ENCODE measurements at regions of chr20 and their contacts with region 1.

Region 1: GRCh38 chr20:3820048-3820900 is at the start of gene AP5S1:
- DNase-seq: peak; percentile 90 to 97 (median 91)
- H3K4me3 ChIP-seq: peak within 1 kb of the TSS; percentile 78 to 88
- H3K4me3 Mint-ChIP-seq: peak within 1 kb of the TSS; percentile 83 to 94 (median 91)
- H3K27ac ChIP-seq: peak within 1 kb of the TSS; percentile 99
- H3K27ac Mint-ChIP-seq: peak within 1 kb of the TSS; percentile 96 to 99 (median 99)
- H3K4me1 ChIP-seq: peaks cover 53% of the 10 kb centered on the region
- H3K4me1 Mint-ChIP-seq: peaks cover 30 to 66% (median 50%) of the 10 kb centered on the region in 4 donors
- H3K27me3 ChIP-seq: no peaks in the 10 kb centered on the region
- H3K27me3 Mint-ChIP-seq: no peaks in the 10 kb centered on the region
- total RNA-seq, gene AP5S1: 10.4 to 11.1 TPM

Region 2: DNA sequence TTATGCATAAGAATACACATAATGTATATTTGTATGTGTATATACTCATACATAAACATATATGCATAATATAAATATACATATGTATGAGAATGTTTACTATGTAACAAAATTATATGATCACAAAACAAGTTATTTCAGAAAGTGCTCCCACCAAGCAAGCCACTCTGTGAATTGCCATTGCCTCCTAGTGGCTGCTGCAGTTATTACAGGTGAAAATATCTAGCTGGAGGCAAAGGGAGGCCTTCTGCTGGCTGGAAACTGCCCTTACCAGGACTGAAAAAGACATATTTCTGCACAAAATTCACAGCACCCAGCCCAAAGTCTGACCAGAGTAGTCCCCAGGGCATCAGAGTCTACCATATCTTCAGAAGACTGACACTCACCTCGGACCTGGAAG is 124.1 kb before region 1 on chr20:
- CTCF ChIA-PET with region 1: no interaction called
- POLR2A ChIA-PET with region 1: no interaction called
- intact Hi-C with region 1: no loop called
- DNase-seq: no peak
- H3K4me3 ChIP-seq: no peak overlapping the region
- H3K4me3 Mint-ChIP-seq: no peak overlapping the region
- H3K27ac ChIP-seq: no peak overlapping the region
- H3K27ac Mint-ChIP-seq: no peak overlapping the region
- H3K4me1 ChIP-seq: no peaks in the 10 kb centered on the region
- H3K4me1 Mint-ChIP-seq: no peaks in the 10 kb centered on the region
- H3K27me3 ChIP-seq: no peaks in the 10 kb centered on the region
- H3K27me3 Mint-ChIP-seq: peaks cover 2% of the 10 kb centered on the region in 2 donors

Region 3: DNA sequence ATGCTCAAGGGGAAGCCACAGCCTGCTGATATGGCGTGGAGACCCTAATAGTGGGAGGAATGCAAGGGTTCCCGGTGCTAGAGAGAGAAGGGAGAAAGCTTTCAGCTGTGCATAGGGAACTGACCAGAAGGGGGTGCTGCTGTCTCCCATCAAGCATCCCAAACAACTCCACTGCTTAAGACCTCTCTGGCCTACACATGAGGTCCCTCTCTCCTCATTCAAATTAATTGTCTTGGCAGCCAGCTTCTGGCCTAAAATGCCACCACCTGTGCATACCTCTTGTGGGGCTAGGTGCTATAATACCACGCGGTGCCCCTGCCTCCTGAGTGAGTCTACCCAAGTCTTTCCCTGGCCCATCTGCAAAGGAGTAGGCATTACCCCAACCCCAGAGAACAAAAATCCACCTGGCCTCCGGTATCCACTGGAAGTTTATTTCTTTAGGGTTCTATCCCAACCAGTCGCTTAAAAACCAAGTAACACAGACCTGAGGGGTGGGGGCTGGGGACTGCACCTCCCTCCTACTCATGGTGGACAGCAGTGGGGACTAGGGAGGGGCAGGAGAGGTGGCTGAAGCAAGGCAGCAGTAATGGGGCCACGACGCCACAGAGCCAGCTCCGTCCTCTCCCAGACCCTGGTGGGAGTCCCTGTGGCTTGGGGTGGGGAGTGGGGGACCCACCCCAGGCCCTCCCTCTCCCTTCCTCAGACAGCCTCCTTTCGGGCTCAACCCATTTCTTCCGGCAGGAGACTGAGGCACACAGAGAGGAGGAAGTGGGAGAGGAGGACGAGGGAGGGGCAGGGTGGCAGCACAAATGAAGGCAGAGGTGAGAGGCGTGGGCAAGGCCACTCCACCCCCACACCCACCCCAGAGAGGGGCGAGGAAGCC is 66.9 kb before region 1 on chr20:
- CTCF ChIA-PET with region 1: interaction called, 8 read pairs
- POLR2A ChIA-PET with region 1: interaction called, 5 read pairs
- intact Hi-C with region 1: loop called (anchors 1 kb)
- DNase-seq: peak; percentile 51 to 61 (median 57)
- H3K4me3 ChIP-seq: no peak overlapping the region
- H3K4me3 Mint-ChIP-seq: peak overlapping the region in 1 of 8 donors; percentile 17
- H3K27ac ChIP-seq: no peak overlapping the region
- H3K27ac Mint-ChIP-seq: peak overlapping the region in 4 of 7 donors; percentile 53 to 84 (median 66)
- H3K4me1 ChIP-seq: no peaks in the 10 kb centered on the region
- H3K4me1 Mint-ChIP-seq: peaks cover 2 to 14% (median 12%) of the 10 kb centered on the region in 4 donors
- H3K27me3 ChIP-seq: no peaks in the 10 kb centered on the region
- H3K27me3 Mint-ChIP-seq: peaks cover 0 to 2% of the 10 kb centered on the region in 2 donors

Region 4: DNA sequence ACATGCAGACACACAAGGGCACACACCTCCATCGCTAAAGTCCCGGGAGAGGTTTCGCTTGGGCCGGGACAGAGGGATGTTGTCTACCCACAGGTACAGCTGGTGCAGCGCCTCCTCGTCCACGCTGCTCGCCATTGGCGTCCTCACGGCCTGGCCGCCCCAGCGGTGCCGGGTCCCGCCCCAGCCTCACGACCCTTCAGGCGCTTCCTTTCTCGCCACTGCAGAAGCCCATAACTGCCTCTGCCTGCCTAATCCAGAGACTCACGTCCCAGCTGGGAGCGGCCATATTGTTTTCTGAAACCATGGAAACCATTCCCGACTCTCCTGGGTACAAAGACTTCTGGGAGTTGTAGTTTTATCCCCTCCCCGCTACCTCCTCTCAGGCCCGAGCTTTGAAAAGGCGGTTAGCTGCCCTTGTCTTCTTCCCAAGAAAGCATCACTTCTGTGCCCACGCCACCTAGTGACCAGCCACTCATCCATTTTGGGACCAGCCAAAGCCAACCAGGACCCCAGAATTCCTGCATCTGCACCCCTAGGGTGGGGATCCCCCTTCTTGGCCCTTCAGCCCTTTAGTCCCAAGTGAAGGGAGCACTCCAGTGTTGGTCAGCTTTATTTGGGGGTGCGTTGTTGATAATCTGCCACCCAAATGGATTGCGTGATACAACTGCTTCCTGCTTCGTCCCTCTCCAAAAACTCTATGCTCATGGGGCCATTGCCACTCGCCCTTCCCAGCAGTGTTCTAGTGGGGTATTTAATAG is 38.9 kb before region 1 on chr20 and contains the start of gene SPEF1:
- CTCF ChIA-PET with region 1: interaction called, 12 read pairs
- POLR2A ChIA-PET with region 1: interaction called, 180 read pairs
- intact Hi-C with region 1: loop called (anchors 1 kb)
- DNase-seq: peak; percentile 57 to 67 (median 64)
- H3K4me3 ChIP-seq: peak within 1 kb of the TSS in 1 of 2 donors; percentile 18
- H3K4me3 Mint-ChIP-seq: peak within 1 kb of the TSS; percentile 35 to 82 (median 78)
- H3K27ac ChIP-seq: peak within 1 kb of the TSS; percentile 31
- H3K27ac Mint-ChIP-seq: peak within 1 kb of the TSS; percentile 5 to 91 (median 78)
- H3K4me1 ChIP-seq: peaks cover 52% of the 10 kb centered on the region
- H3K4me1 Mint-ChIP-seq: peaks cover 26 to 61% (median 43%) of the 10 kb centered on the region in 4 donors
- H3K27me3 ChIP-seq: no peaks in the 10 kb centered on the region
- H3K27me3 Mint-ChIP-seq: peaks cover 1% of the 10 kb centered on the region in 2 donors
- total RNA-seq, gene SPEF1: not detected

Region 5: GRCh38 chr20:3786665-3787323 is 33.5 kb before region 1 on chr20 and contains the start of gene CENPB:
- CTCF ChIA-PET with region 1: no interaction called
- POLR2A ChIA-PET with region 1: interaction called, 180 read pairs
- intact Hi-C with region 1: loop called (anchors 1 kb)
- DNase-seq: peak; percentile 82 to 94 (median 88)
- H3K4me3 ChIP-seq: peak within 1 kb of the TSS; percentile 29 to 38
- H3K4me3 Mint-ChIP-seq: peak within 1 kb of the TSS; percentile 74 to 87 (median 84)
- H3K27ac ChIP-seq: peak within 1 kb of the TSS; percentile 12
- H3K27ac Mint-ChIP-seq: peak within 1 kb of the TSS; percentile 79 to 93 (median 88)
- H3K4me1 ChIP-seq: peaks cover 37% of the 10 kb centered on the region
- H3K4me1 Mint-ChIP-seq: peaks cover 23 to 41% (median 33%) of the 10 kb centered on the region in 4 donors
- H3K27me3 ChIP-seq: no peaks in the 10 kb centered on the region
- H3K27me3 Mint-ChIP-seq: no peaks in the 10 kb centered on the region
- total RNA-seq, gene CENPB: 52.2 to 56.7 TPM

Region 6: DNA sequence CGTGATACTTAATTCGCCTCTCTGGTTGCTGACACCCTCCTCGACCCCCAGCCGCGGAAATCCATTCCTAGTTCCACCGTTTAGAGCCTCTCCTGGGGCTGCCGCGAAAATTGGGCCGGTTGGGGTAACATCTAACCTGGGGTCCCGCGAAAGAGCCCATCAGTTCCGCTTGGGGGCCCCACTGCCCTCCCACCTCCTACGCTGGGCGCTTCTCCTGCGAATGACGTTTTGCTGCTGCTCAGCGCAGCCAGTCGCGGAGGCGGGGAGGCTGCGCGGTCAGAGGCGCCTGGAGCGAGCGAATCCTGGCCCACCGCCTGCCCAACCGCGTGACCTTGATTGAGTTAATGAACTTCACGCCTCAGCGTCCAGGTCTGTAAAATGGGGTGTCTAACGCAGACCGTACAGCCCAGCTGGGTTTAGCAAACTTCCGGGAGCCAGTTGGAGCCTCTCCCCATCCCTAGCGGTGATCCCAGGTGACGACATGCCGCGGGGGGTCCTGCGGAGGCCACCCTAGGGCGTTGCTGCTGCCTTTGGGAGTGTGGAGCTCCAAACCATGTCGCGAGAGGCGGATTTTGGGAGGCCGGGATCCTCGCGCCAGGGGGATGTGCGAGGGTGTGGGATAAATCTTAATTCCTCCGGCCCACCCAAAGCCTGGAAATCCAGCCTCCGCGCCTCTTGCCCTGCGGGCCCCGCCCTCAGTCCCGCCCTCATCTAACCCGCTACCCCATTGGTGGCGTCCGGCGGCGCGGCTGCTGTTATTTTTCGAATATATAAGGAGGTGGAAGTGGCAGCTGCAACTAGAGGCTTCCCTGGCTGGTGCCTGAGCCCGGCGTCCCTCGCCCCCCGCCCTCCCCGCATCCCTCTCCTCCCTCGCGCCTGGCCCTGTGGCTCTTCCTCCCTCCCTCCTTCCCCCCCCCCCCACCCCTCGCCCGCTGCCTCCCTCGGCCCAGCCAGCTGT is 24.5 kb before region 1 on chr20 and contains the start of gene CDC25B:
- CTCF ChIA-PET with region 1: interaction called, 25 read pairs
- POLR2A ChIA-PET with region 1: interaction called, 180 read pairs
- intact Hi-C with region 1: loop called (anchors 1 kb)
- DNase-seq: peak; percentile 83 to 94 (median 85)
- H3K4me3 ChIP-seq: peak within 1 kb of the TSS; percentile 94 to 97
- H3K4me3 Mint-ChIP-seq: peak within 1 kb of the TSS; percentile 98 to 100 (median 100)
- H3K27ac ChIP-seq: peak within 1 kb of the TSS; percentile 86
- H3K27ac Mint-ChIP-seq: peak within 1 kb of the TSS; percentile 95 to 99 (median 97)
- H3K4me1 ChIP-seq: peaks cover 38% of the 10 kb centered on the region
- H3K4me1 Mint-ChIP-seq: peaks cover 21 to 54% (median 35%) of the 10 kb centered on the region in 4 donors
- H3K27me3 ChIP-seq: no peaks in the 10 kb centered on the region
- H3K27me3 Mint-ChIP-seq: no peaks in the 10 kb centered on the region
- total RNA-seq, gene CDC25B: 410 to 420 TPM

Region 7: GRCh38 chr20:3846740-3847428 is 26.6 kb after region 1 on chr20 and contains the start of gene MAVS:
- CTCF ChIA-PET with region 1: interaction called, 8 read pairs
- POLR2A ChIA-PET with region 1: interaction called, 7 read pairs
- intact Hi-C with region 1: loop called (anchors 1 kb)
- DNase-seq: peak; percentile 81 to 84 (median 81)
- H3K4me3 ChIP-seq: peak within 1 kb of the TSS; percentile 45 to 92
- H3K4me3 Mint-ChIP-seq: peak within 1 kb of the TSS; percentile 79 to 93 (median 92)
- H3K27ac ChIP-seq: peak within 1 kb of the TSS; percentile 85
- H3K27ac Mint-ChIP-seq: peak within 1 kb of the TSS; percentile 78 to 97 (median 93)
- H3K4me1 ChIP-seq: peaks cover 27% of the 10 kb centered on the region
- H3K4me1 Mint-ChIP-seq: peaks cover 20 to 38% (median 25%) of the 10 kb centered on the region in 4 donors
- H3K27me3 ChIP-seq: no peaks in the 10 kb centered on the region
- H3K27me3 Mint-ChIP-seq: no peaks in the 10 kb centered on the region
- total RNA-seq, gene MAVS: 45.2 to 49.3 TPM

Region 8: GRCh38 chr20:3915691-3916090 is 95.4 kb after region 1 on chr20:
- CTCF ChIA-PET with region 1: no interaction called
- POLR2A ChIA-PET with region 1: no interaction called
- intact Hi-C with region 1: no loop called
- DNase-seq: no peak
- H3K4me3 ChIP-seq: no peak overlapping the region
- H3K4me3 Mint-ChIP-seq: no peak overlapping the region
- H3K27ac ChIP-seq: no peak overlapping the region
- H3K27ac Mint-ChIP-seq: peak overlapping the region in 5 of 7 donors; percentile 36 to 84 (median 64)
- H3K4me1 ChIP-seq: peaks cover 17% of the 10 kb centered on the region
- H3K4me1 Mint-ChIP-seq: peaks cover 21 to 36% (median 33%) of the 10 kb centered on the region in 4 donors
- H3K27me3 ChIP-seq: no peaks in the 10 kb centered on the region
- H3K27me3 Mint-ChIP-seq: no peaks in the 10 kb centered on the region